ENCODE measurements at regions of chr6 and their contacts with region 1.

Region 1: DNA sequence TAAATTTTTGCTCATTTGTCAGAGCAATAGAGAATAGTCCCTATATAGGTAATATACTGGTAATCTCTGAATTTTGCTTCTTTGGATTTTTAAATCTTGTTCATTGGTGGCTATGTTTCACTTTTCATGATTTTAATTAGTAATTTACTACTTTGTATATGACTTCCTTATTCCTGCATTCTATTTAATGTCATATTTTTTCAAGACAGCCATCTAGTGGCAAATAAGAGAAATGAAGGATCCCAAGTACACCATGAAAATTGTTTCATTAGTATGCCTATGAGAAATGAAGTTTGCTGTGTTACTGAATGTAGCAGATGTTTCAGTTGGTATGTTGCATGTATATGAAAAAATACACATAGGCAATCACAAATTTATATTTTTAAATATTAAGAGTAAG is 82.4 kb downstream of the ZNF292 start:
- DNase-seq: peak; percentile 9
- ATAC-seq: peak; percentile 54; the same call in 2 of the 3 replicates
- H3K4me3 ChIP-seq: no peak overlapping the region
- H3K27ac ChIP-seq: no peak overlapping the region
- H3K4me1 ChIP-seq: peaks cover 6% of the 10 kb centered on the region
- H3K27me3 ChIP-seq: no peaks in the 10 kb centered on the region
- CTCF ChIP-seq: peak; percentile 40
- EP300 ChIP-seq: no peak
- POLR2A ChIP-seq: no peak
- RAD21 ChIP-seq: no peak

Region 2: DNA sequence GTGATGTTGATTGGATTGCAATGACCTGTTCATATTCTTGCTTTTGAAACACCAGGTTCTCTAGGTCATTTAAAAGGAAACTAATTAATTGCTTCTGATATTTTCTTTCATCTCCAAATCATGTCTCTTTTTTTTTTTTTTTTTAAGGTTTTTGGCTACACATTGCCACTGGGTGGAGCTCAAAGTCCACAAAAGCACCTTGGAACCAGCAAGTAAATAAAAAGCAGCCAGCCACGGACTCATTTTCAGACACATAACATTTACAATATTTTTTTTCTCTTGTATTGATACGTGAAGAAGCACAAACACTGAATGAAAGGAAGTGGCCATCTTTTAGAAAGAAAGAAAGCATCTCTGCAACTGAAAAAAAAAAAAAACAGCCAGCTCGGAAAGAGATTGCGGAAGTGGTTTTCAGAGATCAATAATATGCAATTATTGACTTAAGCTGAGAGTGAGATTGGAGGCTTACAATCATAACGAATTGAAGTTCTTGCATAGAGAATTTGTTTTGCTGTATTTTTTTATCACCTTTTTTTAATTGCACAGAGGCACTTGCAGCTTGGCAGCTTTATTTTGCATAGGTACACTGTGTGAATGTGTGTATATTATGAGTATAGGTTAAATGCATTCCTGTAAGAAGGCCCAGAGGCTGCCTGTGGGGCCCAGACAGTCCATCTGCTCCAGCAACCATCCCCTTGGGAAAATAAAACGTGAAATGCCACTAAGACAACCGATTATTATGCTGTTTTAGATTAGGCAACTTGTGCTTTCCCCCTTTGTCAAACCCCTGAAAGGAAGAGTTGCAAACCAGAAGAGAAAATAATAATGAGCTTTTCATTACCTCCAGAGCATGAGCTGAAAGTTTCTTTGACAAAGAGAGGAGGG is 171.1 kb before region 1 on chr6:
- CTCF ChIA-PET with region 1: no interaction called
- POLR2A ChIA-PET with region 1: no interaction called
- in situ Hi-C with region 1: no loop called
- intact Hi-C with region 1: loop called (anchors 5 kb)
- DNase-seq: peak; percentile 51
- ATAC-seq: peak; percentile 87
- H3K4me3 ChIP-seq: peak overlapping the region; percentile 11 to 41 (median 41); a peak in 4 of 6 replicates
- H3K27ac ChIP-seq: no peak overlapping the region
- H3K4me1 ChIP-seq: peaks cover 17% of the 10 kb centered on the region
- H3K27me3 ChIP-seq: no peaks in the 10 kb centered on the region; a peak in 1 of 5 replicates
- CTCF ChIP-seq: peak; percentile 66
- EP300 ChIP-seq: peak in 1 of 2 experiments; percentile 29; a peak in 1 of 4 replicates
- POLR2A ChIP-seq: no peak
- RAD21 ChIP-seq: peak; percentile 30; the same call in 1 of the 2 replicates

Region 3: GRCh38 chr6:87139236-87139635 is 98.6 kb before region 1 on chr6:
- CTCF ChIA-PET with region 1: interaction called, 15 read pairs
- POLR2A ChIA-PET with region 1: no interaction called
- in situ Hi-C with region 1: loop called (anchors 5 kb)
- intact Hi-C with region 1: loop called (anchors 1 kb)
- DNase-seq: peak; percentile 48
- ATAC-seq: peak; percentile 86
- H3K4me3 ChIP-seq: no peak overlapping the region
- H3K27ac ChIP-seq: no peak overlapping the region
- H3K4me1 ChIP-seq: peaks cover 10% of the 10 kb centered on the region; the same call in 1 of the 2 replicates
- H3K27me3 ChIP-seq: no peaks in the 10 kb centered on the region
- CTCF ChIP-seq: peak; percentile 80
- EP300 ChIP-seq: no peak
- POLR2A ChIP-seq: no peak
- RAD21 ChIP-seq: peak; percentile 58; the same call in 1 of the 2 replicates

Region 4: GRCh38 chr6:87154993-87155841 is 82.6 kb before region 1 on chr6 and contains the start of gene ZNF292:
- CTCF ChIA-PET with region 1: no interaction called
- POLR2A ChIA-PET with region 1: no interaction called
- in situ Hi-C with region 1: no loop called
- intact Hi-C with region 1: loop called (anchors 5 kb)
- DNase-seq: peak; percentile 93
- ATAC-seq: peak; percentile 88
- H3K4me3 ChIP-seq: peak within 1 kb of the TSS; percentile 86 to 96 (median 88)
- H3K27ac ChIP-seq: peak within 1 kb of the TSS; percentile 87
- H3K4me1 ChIP-seq: peaks cover 32% of the 10 kb centered on the region
- H3K27me3 ChIP-seq: peaks cover 0 to 3% of the 10 kb centered on the region in 2 experiments; a peak in 1 of 5 replicates
- CTCF ChIP-seq: no peak; the same call in 1 of the 2 replicates
- EP300 ChIP-seq: peak in 1 of 2 experiments; percentile 21; a peak in 1 of 4 replicates
- POLR2A ChIP-seq: peak in 1 of 2 experiments; percentile 78; a peak in 2 of 4 replicates
- RAD21 ChIP-seq: peak; percentile 25; the same call in 1 of the 2 replicates
- total RNA-seq, gene ZNF292: 12.8 and 15.4 TPM in 2 replicates

Region 5: GRCh38 chr6:87197547-87197946 is 40.3 kb before region 1 on chr6:
- CTCF ChIA-PET with region 1: no interaction called
- POLR2A ChIA-PET with region 1: no interaction called
- in situ Hi-C with region 1: no loop called
- intact Hi-C with region 1: no loop called
- DNase-seq: no peak
- ATAC-seq: no peak
- H3K4me3 ChIP-seq: no peak overlapping the region
- H3K27ac ChIP-seq: no peak overlapping the region
- H3K4me1 ChIP-seq: no peaks in the 10 kb centered on the region
- H3K27me3 ChIP-seq: no peaks in the 10 kb centered on the region
- CTCF ChIP-seq: no peak
- EP300 ChIP-seq: no peak
- POLR2A ChIP-seq: no peak
- RAD21 ChIP-seq: no peak

Region 6: GRCh38 chr6:87251225-87251624 is 13.4 kb after region 1 on chr6:
- CTCF ChIA-PET with region 1: no interaction called
- POLR2A ChIA-PET with region 1: no interaction called
- in situ Hi-C with region 1: no loop called
- intact Hi-C with region 1: no loop called
- DNase-seq: no peak
- ATAC-seq: no peak
- H3K4me3 ChIP-seq: no peak overlapping the region
- H3K27ac ChIP-seq: no peak overlapping the region
- H3K4me1 ChIP-seq: no peaks in the 10 kb centered on the region
- H3K27me3 ChIP-seq: no peaks in the 10 kb centered on the region
- CTCF ChIP-seq: no peak
- EP300 ChIP-seq: no peak
- POLR2A ChIP-seq: no peak
- RAD21 ChIP-seq: no peak

Region 7: DNA sequence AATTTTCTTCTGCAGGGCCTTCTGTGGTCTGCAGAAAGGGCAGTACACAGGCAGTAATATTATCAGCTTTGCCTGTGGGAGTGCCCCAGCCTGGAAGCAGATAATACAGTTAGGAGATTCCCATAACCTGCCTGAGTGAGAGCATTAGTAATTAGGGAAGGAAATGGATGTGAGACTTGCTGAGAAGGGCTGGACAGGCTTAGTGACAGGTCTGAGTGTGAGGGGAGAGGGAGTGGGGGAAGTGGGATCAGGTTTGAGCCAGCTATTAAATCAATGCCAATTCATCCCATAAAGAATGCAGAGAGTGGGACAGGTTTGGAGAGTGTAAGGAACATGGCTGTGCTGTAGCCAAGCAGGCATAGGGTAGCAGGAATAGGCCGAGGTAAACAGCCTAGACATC is 159.9 kb after region 1 on chr6:
- CTCF ChIA-PET with region 1: no interaction called
- POLR2A ChIA-PET with region 1: no interaction called
- in situ Hi-C with region 1: no loop called
- intact Hi-C with region 1: no loop called
- DNase-seq: no peak
- ATAC-seq: no peak
- H3K4me3 ChIP-seq: no peak overlapping the region
- H3K27ac ChIP-seq: no peak overlapping the region
- H3K4me1 ChIP-seq: no peaks in the 10 kb centered on the region
- H3K27me3 ChIP-seq: no peaks in the 10 kb centered on the region; a peak in 1 of 5 replicates
- CTCF ChIP-seq: no peak
- EP300 ChIP-seq: no peak
- POLR2A ChIP-seq: no peak
- RAD21 ChIP-seq: no peak

Measured in HepG2 (cell line).